ENCODE measurements at regions of chr3 and their contacts with region 1.

Region 1: GRCh38 chr3:108153451-108153981 is 62.7 kb upstream of the CD47 start:
- DNase-seq: peak; percentile 74
- ATAC-seq: peak; percentile 71
- H3K4me3 Mint-ChIP-seq: no peak overlapping the region
- H3K27ac Mint-ChIP-seq: no peak overlapping the region
- H3K4me1 Mint-ChIP-seq: peaks cover 16% of the 10 kb centered on the region
- H3K27me3 Mint-ChIP-seq: no peaks in the 10 kb centered on the region
- CTCF ChIP-seq: peak; percentile 51

Region 2: DNA sequence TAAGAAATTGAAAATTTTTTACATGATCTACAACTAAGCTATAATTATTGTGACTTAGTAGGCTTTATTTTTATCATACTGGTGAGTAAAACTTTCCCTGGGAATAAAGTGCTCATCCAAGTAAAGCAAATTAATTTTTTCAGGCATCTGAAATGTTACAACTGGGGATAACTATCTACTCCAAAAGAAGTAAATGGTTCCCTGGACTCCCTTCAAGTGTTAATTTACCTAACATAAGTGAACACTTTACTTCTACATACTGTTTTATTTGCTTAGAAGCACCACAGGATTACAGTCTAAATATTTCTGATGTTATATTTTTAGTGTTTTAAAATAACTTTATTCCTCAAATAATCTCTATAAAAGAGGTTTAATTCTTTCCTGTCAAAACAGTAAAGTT is 10.9 kb after region 1 on chr3:
- CTCF ChIA-PET with region 1: interaction called, 30 read pairs
- POLR2A ChIA-PET with region 1: no interaction called
- intact Hi-C with region 1: no loop called
- DNase-seq: no peak
- ATAC-seq: no peak
- H3K4me3 Mint-ChIP-seq: no peak overlapping the region
- H3K27ac Mint-ChIP-seq: no peak overlapping the region
- H3K4me1 Mint-ChIP-seq: peaks cover 5% of the 10 kb centered on the region
- H3K27me3 Mint-ChIP-seq: no peaks in the 10 kb centered on the region
- CTCF ChIP-seq: no peak

Region 3: GRCh38 chr3:108171106-108171505 is 17.6 kb after region 1 on chr3:
- CTCF ChIA-PET with region 1: interaction called, 23 read pairs
- POLR2A ChIA-PET with region 1: interaction called, 3 read pairs
- intact Hi-C with region 1: no loop called
- DNase-seq: no peak
- ATAC-seq: no peak
- H3K4me3 Mint-ChIP-seq: no peak overlapping the region
- H3K27ac Mint-ChIP-seq: no peak overlapping the region
- H3K4me1 Mint-ChIP-seq: peaks cover 21% of the 10 kb centered on the region
- H3K27me3 Mint-ChIP-seq: no peaks in the 10 kb centered on the region
- CTCF ChIP-seq: no peak

Region 4: DNA sequence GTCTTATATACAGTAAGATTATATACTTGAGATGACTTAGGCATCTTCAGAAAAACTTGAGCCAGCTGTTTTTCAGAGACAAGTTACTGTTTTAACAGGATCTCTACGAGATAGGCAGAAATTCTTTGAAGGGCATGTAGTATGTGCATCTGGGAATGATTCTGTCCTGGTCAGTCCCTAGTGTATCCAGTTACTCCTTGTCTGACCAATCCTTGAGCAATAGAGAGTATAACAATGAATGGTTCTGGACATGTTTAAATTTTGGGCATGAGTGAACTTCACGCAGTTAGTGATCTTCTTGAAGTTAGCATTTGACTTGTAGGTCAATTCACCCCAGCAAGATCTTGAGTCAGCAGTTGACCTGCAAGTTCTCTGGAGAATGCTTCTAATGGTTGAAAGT is 118.1 kb after region 1 on chr3:
- CTCF ChIA-PET with region 1: no interaction called
- POLR2A ChIA-PET with region 1: no interaction called
- intact Hi-C with region 1: no loop called
- DNase-seq: no peak
- ATAC-seq: no peak
- H3K4me3 Mint-ChIP-seq: no peak overlapping the region
- H3K27ac Mint-ChIP-seq: no peak overlapping the region
- H3K4me1 Mint-ChIP-seq: no peaks in the 10 kb centered on the region
- H3K27me3 Mint-ChIP-seq: no peaks in the 10 kb centered on the region
- CTCF ChIP-seq: no peak

Region 5: DNA sequence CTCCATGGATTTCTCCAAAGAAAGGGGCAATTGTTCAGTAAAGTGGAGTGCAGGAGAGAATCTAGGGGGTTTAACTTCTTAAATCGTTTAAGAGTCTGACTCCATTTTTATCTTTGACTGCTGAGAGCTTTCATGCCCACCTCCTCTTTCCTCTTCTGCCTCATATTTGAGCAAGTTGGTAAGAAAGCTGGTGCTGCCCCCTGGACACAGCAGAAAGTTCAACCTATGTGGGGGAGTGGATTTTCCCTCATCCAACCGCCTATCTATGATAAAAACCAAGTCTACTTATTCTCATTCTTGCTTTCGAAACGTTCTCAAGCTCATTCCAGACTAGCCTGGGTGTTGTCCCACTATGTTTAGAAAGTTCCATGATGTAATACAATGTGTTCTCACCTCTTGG is 168.8 kb after region 1 on chr3:
- CTCF ChIA-PET with region 1: interaction called, 4 read pairs
- POLR2A ChIA-PET with region 1: interaction called, 3 read pairs
- intact Hi-C with region 1: loop called (anchors 10 kb)
- DNase-seq: peak; percentile 66
- ATAC-seq: peak; percentile 85
- H3K4me3 Mint-ChIP-seq: no peak overlapping the region
- H3K27ac Mint-ChIP-seq: peak overlapping the region; percentile 34
- H3K4me1 Mint-ChIP-seq: peaks cover 27% of the 10 kb centered on the region
- H3K27me3 Mint-ChIP-seq: peaks cover 2% of the 10 kb centered on the region
- CTCF ChIP-seq: no peak

Region 6: GRCh38 chr3:108406661-108407206 is 253.2 kb after region 1 on chr3:
- CTCF ChIA-PET with region 1: interaction called, 26 read pairs
- POLR2A ChIA-PET with region 1: no interaction called
- intact Hi-C with region 1: loop called (anchors 10 kb)
- DNase-seq: peak; percentile 32
- ATAC-seq: peak; percentile 89
- H3K4me3 Mint-ChIP-seq: no peak overlapping the region
- H3K27ac Mint-ChIP-seq: no peak overlapping the region
- H3K4me1 Mint-ChIP-seq: no peaks in the 10 kb centered on the region
- H3K27me3 Mint-ChIP-seq: no peaks in the 10 kb centered on the region
- CTCF ChIP-seq: peak; percentile 56

Region 7: GRCh38 chr3:108589146-108589997 is 435.9 kb after region 1 on chr3 and contains the starts of genes CIP2A and DZIP3:
- CTCF ChIA-PET with region 1: no interaction called
- POLR2A ChIA-PET with region 1: no interaction called
- intact Hi-C with region 1: no loop called
- DNase-seq: peak; percentile 94
- ATAC-seq: peak; percentile 92
- H3K4me3 Mint-ChIP-seq: peak within 1 kb of the TSS; percentile 97
- H3K27ac Mint-ChIP-seq: peak within 1 kb of the TSS; percentile 96
- H3K4me1 Mint-ChIP-seq: peaks cover 42% of the 10 kb centered on the region
- H3K27me3 Mint-ChIP-seq: no peaks in the 10 kb centered on the region
- CTCF ChIP-seq: no peak
- total RNA-seq, gene CIP2A: 42.5 to 44.9 TPM
- total RNA-seq, gene DZIP3: 18.5 to 21.8 TPM